A549 (cell line): ENCODE measurements at regions of chr4 and their contacts with region 1.

Region 1: GRCh38 chr4:108018040-108018883 is 28.6 kb downstream of the HADH start:
- DNase-seq: peak; percentile 44 to 60
- ATAC-seq: peak; percentile 78 to 87
- H3K4me3 ChIP-seq: no peak overlapping the region
- H3K27ac ChIP-seq: no peak overlapping the region
- H3K4me1 ChIP-seq: no peaks in the 10 kb centered on the region
- CTCF ChIP-seq: peak; percentile 77
- EP300 ChIP-seq: no peak
- POLR2A ChIP-seq: no peak
- RAD21 ChIP-seq: peak; percentile 67 to 71

Region 2: DNA sequence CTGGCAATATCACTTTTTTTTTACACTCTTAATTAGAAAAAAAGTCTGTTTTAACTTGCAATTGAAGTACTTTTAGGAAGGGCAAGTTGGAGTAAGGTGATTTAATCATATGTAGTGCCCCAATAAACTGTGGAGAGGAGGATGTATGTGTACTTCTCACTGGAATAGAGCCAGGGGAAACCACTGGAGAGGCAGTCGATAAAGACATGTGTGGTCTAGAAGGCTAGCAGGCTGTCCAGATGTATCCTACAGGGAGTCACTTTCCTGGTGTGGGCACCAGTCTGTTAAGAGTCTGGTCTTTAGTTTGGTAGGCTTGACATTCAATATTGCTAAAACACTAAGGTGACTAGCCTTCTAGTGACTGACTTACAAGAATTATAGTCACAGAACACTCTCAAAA is 203.1 kb before region 1 on chr4:
- CTCF ChIA-PET with region 1: no interaction called
- POLR2A ChIA-PET with region 1: no interaction called
- DNase-seq: no peak
- ATAC-seq: no peak
- H3K4me3 ChIP-seq: no peak overlapping the region
- H3K27ac ChIP-seq: no peak overlapping the region
- H3K4me1 ChIP-seq: no peaks in the 10 kb centered on the region
- CTCF ChIP-seq: no peak
- EP300 ChIP-seq: no peak
- POLR2A ChIP-seq: no peak
- RAD21 ChIP-seq: no peak

Region 3: DNA sequence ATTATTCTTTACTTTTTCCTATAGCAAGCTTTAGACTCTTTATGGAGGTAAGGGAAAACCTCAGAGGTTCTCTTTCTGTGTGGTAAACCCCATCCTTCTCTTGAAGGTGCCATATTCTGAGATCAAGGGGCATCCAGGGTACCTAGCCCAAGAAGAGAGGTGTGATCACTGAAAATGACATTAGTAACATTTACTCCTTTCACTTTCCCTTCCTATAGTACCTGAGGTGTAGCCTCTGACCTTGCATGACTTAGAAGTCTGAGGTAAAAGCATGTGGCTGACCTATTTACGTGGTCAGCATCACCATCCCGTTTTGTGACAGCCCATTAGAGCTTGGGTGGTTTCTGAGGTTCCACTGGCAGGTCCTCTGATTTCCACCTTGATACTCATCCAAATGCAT is 167.8 kb before region 1 on chr4:
- CTCF ChIA-PET with region 1: no interaction called
- POLR2A ChIA-PET with region 1: no interaction called
- DNase-seq: no peak
- ATAC-seq: no peak
- H3K4me3 ChIP-seq: no peak overlapping the region
- H3K27ac ChIP-seq: no peak overlapping the region
- H3K4me1 ChIP-seq: peaks cover 29% of the 10 kb centered on the region
- CTCF ChIP-seq: no peak
- EP300 ChIP-seq: no peak
- POLR2A ChIP-seq: no peak
- RAD21 ChIP-seq: no peak

Region 4: GRCh38 chr4:108036213-108036612 is 18.0 kb after region 1 on chr4:
- CTCF ChIA-PET with region 1: interaction called, 15 read pairs
- POLR2A ChIA-PET with region 1: no interaction called
- DNase-seq: no peak
- ATAC-seq: no peak
- H3K4me3 ChIP-seq: no peak overlapping the region
- H3K27ac ChIP-seq: no peak overlapping the region
- H3K4me1 ChIP-seq: no peaks in the 10 kb centered on the region
- CTCF ChIP-seq: no peak
- EP300 ChIP-seq: no peak
- POLR2A ChIP-seq: no peak
- RAD21 ChIP-seq: no peak

Region 5: GRCh38 chr4:108570993-108571569 is 552.8 kb after region 1 on chr4:
- CTCF ChIA-PET with region 1: interaction called, 21 read pairs
- POLR2A ChIA-PET with region 1: interaction called, 6 read pairs
- DNase-seq: no peak
- ATAC-seq: no peak
- H3K4me3 ChIP-seq: no peak overlapping the region
- H3K27ac ChIP-seq: no peak overlapping the region
- H3K4me1 ChIP-seq: no peaks in the 10 kb centered on the region
- CTCF ChIP-seq: no peak
- EP300 ChIP-seq: no peak
- POLR2A ChIP-seq: no peak
- RAD21 ChIP-seq: no peak